Ascending aorta (tissue), 2 donors: ENCODE measurements at regions of chr12 and their contacts with region 1.

Region 1: GRCh38 chr12:84874125-84874824 is 38.3 kb downstream of the SLC6A15 start:
- DNase-seq: no peak
- H3K4me3 ChIP-seq: no peak overlapping the region
- H3K27ac ChIP-seq: no peak overlapping the region
- H3K4me1 ChIP-seq: no peaks in the 10 kb centered on the region
- H3K27me3 ChIP-seq: no peaks in the 10 kb centered on the region
- CTCF ChIP-seq: peak; percentile 47 to 67 (median 59)

Region 2: DNA sequence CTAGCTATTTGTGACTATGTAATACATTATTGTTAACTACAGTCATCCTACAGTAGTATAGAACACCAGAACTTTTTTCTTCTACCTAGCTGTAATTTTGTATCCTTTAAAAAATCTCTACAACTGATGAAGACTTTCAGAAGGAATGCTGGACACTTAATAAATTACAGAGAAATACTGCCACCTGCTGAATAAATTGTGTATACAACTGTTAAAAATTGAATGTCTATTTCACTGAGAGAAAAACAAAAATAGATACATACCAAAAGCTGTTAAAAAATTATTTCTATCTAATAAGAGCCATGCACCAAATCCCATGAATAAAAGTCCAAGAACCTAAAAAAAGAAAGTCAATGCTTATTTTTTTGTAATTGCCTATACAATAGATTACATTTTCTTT is 155.2 kb after region 1 on chr12:
- intact Hi-C with region 1: loop called (anchors 1 kb)
- DNase-seq: no peak
- H3K4me3 ChIP-seq: no peak overlapping the region
- H3K27ac ChIP-seq: no peak overlapping the region
- H3K4me1 ChIP-seq: no peaks in the 10 kb centered on the region
- H3K27me3 ChIP-seq: no peaks in the 10 kb centered on the region
- CTCF ChIP-seq: peak; percentile 21 to 44 (median 33)